AG04450 (cell line): ENCODE measurements at regions of chr1 and their contacts with region 1.

Region 1: GRCh38 chr1:94335950-94336349 is 82.2 kb upstream of the ABCD3 start:
- DNase-seq: peak; percentile 88
- H3K4me3 ChIP-seq: no peak overlapping the region
- H3K27ac ChIP-seq: no peak overlapping the region
- H3K27me3 ChIP-seq: peaks cover 9% of the 10 kb centered on the region
- CTCF ChIP-seq: peak; percentile 86

Region 2: DNA sequence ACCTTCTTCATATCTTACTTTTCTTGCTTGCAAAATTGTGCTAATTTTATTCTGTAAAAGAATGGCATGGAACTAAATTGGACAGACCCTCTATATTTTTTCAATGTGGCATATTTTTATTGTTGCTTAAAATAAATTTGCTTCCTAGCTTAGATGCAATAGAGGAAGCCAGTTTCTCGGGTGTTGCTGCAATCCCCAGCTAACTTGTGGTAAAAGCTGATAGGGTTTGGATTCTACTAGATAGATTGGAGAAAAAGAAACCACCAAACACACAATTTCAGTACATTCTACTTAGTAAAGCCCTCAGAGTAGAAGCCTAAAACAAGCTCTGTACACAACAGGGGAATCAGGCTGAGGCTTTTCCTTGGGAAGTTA is 377.2 kb before region 1 on chr1:
- CTCF ChIA-PET with region 1: interaction called, 13 read pairs
- POLR2A ChIA-PET with region 1: no interaction called
- DNase-seq: no peak
- H3K4me3 ChIP-seq: no peak overlapping the region
- H3K27ac ChIP-seq: no peak overlapping the region
- H3K27me3 ChIP-seq: peaks cover 2% of the 10 kb centered on the region
- CTCF ChIP-seq: no peak

Region 3: GRCh38 chr1:94025383-94026340 is 310.3 kb before region 1 on chr1:
- CTCF ChIA-PET with region 1: interaction called, 472 read pairs
- POLR2A ChIA-PET with region 1: interaction called, 4 read pairs
- DNase-seq: no peak
- H3K4me3 ChIP-seq: no peak overlapping the region
- H3K27ac ChIP-seq: no peak overlapping the region
- H3K27me3 ChIP-seq: peaks cover under 1% of the 10 kb centered on the region
- CTCF ChIP-seq: peak; percentile 76

Region 4: GRCh38 chr1:94180650-94181049 is 155.3 kb before region 1 on chr1:
- CTCF ChIA-PET with region 1: interaction called, 34 read pairs
- POLR2A ChIA-PET with region 1: no interaction called
- DNase-seq: no peak
- H3K4me3 ChIP-seq: no peak overlapping the region
- H3K27ac ChIP-seq: no peak overlapping the region
- H3K27me3 ChIP-seq: no peaks in the 10 kb centered on the region
- CTCF ChIP-seq: no peak

Region 5: DNA sequence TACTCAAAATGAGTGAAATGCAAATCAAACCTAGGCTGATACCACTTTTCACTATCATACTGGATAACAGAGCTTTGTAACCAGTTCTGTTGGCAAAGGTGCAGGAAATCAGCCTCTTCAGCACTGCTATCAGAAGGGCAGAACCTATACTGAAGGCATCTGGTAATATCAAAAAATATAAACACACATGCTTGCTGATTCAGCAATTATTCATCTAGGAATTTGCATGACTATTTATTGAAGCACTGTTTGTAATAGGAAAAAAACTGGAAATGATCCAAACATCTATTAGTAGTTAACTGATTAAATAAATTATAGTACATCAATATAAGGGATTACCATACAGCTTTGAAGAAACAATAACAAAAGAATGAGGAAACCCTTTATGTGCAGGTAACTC is 120.0 kb before region 1 on chr1:
- CTCF ChIA-PET with region 1: interaction called, 16 read pairs
- POLR2A ChIA-PET with region 1: no interaction called
- DNase-seq: no peak
- H3K4me3 ChIP-seq: no peak overlapping the region
- H3K27ac ChIP-seq: no peak overlapping the region
- H3K27me3 ChIP-seq: no peaks in the 10 kb centered on the region
- CTCF ChIP-seq: no peak

Region 6: GRCh38 chr1:94299627-94300552 is 36.1 kb before region 1 on chr1:
- CTCF ChIA-PET with region 1: interaction called, 19 read pairs
- POLR2A ChIA-PET with region 1: interaction called, 3 read pairs
- DNase-seq: no peak
- H3K4me3 ChIP-seq: no peak overlapping the region
- H3K27ac ChIP-seq: no peak overlapping the region
- H3K27me3 ChIP-seq: no peaks in the 10 kb centered on the region
- CTCF ChIP-seq: no peak